ENCODE measurements at regions of chr17 and their contacts with region 1.

Region 1: DNA sequence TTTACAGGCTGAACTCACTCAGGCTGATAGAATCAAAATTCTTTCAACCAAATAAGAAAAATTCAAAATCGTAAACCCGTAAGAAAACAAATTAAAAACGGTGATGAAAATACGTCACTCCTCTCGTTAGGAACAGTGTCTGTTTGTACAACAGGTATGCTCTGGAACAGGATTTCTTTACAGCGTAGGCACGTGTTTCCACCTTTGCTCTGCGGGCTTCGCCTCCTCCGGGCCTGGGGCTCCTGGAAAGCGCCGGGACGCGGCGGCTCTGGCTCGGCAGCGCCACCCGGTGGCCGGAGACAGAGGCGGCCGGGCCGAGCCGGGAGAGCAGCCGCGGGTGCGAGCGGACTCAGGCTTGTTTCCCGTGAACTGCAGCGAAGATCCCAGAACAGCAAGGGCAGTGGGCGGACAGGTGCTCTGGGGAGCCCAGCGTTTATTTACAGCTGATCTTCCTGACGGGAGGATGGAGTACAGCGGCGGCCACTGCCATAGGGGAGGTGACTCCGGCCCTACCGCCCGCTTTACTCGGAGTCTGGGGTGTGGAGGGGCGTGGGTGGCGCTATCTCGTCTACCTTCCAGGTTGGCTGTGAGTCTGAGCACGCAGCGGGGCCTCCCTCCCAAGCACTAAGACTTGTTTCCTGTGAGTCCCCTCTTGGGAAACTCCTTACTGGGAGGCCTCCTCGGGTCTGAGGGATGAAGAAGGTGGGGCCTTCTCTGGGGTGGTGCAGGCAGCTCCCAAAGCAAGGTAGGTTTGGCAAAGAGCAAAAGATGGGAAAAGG is 40.5 kb upstream of the ATP2A3 start:
- DNase-seq: peak; percentile 63
- ATAC-seq: peak; percentile 78
- H3K4me3 ChIP-seq: peak overlapping the region in 2 of 3 experiments; percentile 33 to 63; a peak in 3 of 6 replicates
- H3K27ac ChIP-seq: peak overlapping the region; percentile 68
- H3K4me1 ChIP-seq: peaks cover 32% of the 10 kb centered on the region
- H3K27me3 ChIP-seq: no peaks in the 10 kb centered on the region
- CTCF ChIP-seq: peak; percentile 91
- EP300 ChIP-seq: no peak
- POLR2A ChIP-seq: 0 out of 4 replicates have a peak, but pooled peaks of 1 of the 2 experiments have one; percentile 43
- RAD21 ChIP-seq: peak; percentile 97

Region 2: GRCh38 chr17:3913531-3914311 is 91.0 kb before region 1 on chr17:
- CTCF ChIA-PET with region 1: interaction called, 13 read pairs
- POLR2A ChIA-PET with region 1: no interaction called
- in situ Hi-C with region 1: no loop called
- intact Hi-C with region 1: no loop called
- DNase-seq: peak; percentile 51
- ATAC-seq: peak; percentile 84
- H3K4me3 ChIP-seq: no peak overlapping the region
- H3K27ac ChIP-seq: no peak overlapping the region
- H3K4me1 ChIP-seq: peaks cover 32% of the 10 kb centered on the region
- H3K27me3 ChIP-seq: peaks cover 2 to 35% of the 10 kb centered on the region in 2 experiments; a peak in 4 of 5 replicates
- CTCF ChIP-seq: peak; percentile 99
- EP300 ChIP-seq: no peak
- POLR2A ChIP-seq: no peak
- RAD21 ChIP-seq: peak; percentile 94

Region 3: DNA sequence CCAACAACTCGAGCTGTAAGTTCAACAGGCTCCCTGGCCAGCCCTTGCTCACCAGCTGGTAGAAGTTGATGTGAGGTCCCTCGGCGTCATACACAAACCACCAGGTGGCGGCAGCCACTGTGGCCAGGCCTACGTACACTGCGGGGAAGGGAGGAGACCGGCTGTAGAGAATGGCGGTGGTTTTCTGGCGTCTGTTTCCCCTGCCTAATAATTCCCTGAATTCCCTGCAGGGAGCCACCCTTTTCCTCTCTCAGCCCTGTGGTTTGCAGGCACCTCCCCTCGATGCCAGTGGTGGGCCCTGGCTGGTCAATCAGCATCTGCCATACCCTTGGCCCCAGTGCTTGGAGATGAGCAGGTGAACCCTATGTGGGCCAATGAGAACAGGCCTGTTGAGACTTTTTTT is 69.6 kb before region 1 on chr17:
- CTCF ChIA-PET with region 1: interaction called, 37 read pairs
- POLR2A ChIA-PET with region 1: interaction called, 5 read pairs
- in situ Hi-C with region 1: loop called (anchors 5 kb)
- intact Hi-C with region 1: loop called (anchors 1 kb)
- DNase-seq: peak; percentile 73
- ATAC-seq: peak; percentile 97
- H3K4me3 ChIP-seq: no peak overlapping the region
- H3K27ac ChIP-seq: no peak overlapping the region
- H3K4me1 ChIP-seq: peaks cover 29% of the 10 kb centered on the region
- H3K27me3 ChIP-seq: no peaks in the 10 kb centered on the region; a peak in 1 of 5 replicates
- CTCF ChIP-seq: peak; percentile 96
- EP300 ChIP-seq: 0 out of 4 replicates have a peak, but pooled peaks of 1 of the 2 experiments have one; percentile 17
- POLR2A ChIP-seq: no peak
- RAD21 ChIP-seq: peak; percentile 89